A673 (cell line): ENCODE measurements at regions of chr17 and their contacts with region 1.

Region 1: DNA sequence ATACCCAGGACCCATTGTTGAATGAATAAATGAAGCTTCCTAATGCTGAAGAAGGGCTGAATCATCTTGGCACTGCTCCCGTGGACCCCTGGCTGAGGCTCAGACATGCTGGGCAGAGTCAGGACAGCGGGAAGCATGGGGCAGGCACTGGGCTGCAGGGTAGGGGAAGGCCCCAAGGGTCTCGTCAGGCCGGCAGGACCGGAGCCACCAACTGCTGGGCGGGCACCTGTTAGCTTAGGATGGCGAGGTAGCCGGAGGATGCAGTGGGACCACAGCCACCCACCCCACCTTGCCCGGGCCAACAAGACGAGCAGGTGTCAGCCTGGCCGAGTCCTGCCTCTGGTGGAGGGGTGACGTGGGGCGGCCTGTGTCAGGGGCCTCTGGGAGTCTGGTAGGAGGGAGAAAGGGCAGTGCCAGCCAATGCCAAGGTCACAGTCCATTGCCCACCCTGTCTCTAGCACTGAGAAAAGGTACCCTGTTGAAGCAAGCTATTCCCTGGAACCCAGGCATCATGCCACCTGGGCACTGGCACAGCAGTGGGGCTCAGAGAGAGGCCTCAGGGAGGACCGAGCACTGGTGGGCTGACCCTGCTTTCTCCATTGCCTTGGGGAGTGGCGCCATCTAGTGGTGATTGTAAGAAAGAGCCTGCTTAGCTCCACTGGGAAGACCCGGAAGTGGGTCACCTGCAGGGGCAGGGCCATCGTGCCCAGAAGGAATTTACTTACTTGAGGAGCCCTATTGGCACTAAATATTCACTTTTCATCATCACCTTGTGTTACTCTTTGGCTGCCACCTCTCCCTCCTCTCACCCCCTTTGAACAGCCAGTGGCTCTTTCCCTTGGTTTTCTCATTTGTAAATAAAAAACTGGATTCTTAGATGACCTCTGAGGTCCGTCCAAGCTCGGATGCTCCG is 3.0 kb upstream of the DLX3 start:
- DNase-seq: peak; percentile 94
- H3K4me3 ChIP-seq: no peak overlapping the region
- H3K27ac ChIP-seq: no peak overlapping the region
- H3K4me1 ChIP-seq: peaks cover 11% of the 10 kb centered on the region
- H3K27me3 ChIP-seq: peaks cover 55% of the 10 kb centered on the region
- CTCF ChIP-seq: peak; percentile 95

Region 2: DNA sequence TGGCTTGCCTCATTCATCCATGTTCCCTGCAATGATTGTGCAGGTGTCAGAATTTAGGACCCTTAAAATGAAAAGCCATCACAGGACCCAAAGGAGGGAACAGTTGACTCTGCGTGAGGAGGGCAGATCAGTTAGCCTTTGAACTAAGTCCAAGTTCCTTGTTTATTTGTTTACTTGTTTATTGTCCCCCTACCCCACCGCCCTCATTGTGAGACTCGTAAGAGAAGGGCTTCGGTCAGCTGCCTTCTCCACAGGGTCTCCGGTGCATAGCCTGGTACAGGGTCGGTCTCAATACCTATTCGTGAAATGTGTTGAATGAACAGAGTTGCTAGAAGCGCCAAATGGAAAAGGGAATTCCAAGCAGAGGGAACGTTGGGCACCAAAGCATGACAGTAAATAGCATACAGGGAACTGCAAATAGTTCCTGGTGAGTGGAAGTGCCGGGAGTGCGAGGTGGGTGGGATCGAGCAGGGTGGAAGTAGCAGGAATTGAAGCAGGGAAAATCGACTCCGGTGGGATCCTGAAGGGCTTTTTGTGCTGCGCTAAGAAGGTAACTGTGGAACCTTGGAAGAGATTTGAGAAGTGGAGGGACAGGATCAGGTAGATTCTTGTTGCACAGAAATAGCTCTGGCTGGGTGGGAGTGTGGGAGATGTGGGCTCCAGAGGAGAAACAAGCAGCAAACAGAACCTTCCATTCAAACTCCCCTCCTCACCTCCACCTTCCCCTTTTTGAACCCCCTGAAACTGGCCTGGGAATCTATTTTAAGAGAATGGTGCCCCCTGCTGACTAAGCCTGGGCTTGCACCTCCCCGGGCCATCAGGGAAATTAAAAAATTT is 303.0 kb before region 1 on chr17:
- CTCF ChIA-PET with region 1: no interaction called
- POLR2A ChIA-PET with region 1: no interaction called
- intact Hi-C with region 1: loop called (anchors 5 kb)
- DNase-seq: peak; percentile 49
- H3K4me3 ChIP-seq: no peak overlapping the region
- H3K27ac ChIP-seq: no peak overlapping the region
- H3K4me1 ChIP-seq: no peaks in the 10 kb centered on the region
- H3K27me3 ChIP-seq: no peaks in the 10 kb centered on the region
- CTCF ChIP-seq: peak; percentile 96

Region 3: GRCh38 chr17:49861150-49861892 is 136.7 kb before region 1 on chr17:
- CTCF ChIA-PET with region 1: interaction called, 71 read pairs
- POLR2A ChIA-PET with region 1: no interaction called
- intact Hi-C with region 1: loop called (anchors 1 kb)
- DNase-seq: peak; percentile 57
- H3K4me3 ChIP-seq: no peak overlapping the region
- H3K27ac ChIP-seq: no peak overlapping the region
- H3K4me1 ChIP-seq: no peaks in the 10 kb centered on the region
- H3K27me3 ChIP-seq: no peaks in the 10 kb centered on the region
- CTCF ChIP-seq: peak; percentile 96

Region 4: GRCh38 chr17:49880291-49881053 is 117.6 kb before region 1 on chr17:
- CTCF ChIA-PET with region 1: interaction called, 10 read pairs
- POLR2A ChIA-PET with region 1: no interaction called
- intact Hi-C with region 1: loop called (anchors 5 kb)
- DNase-seq: peak; percentile 73
- H3K4me3 ChIP-seq: no peak overlapping the region
- H3K27ac ChIP-seq: no peak overlapping the region
- H3K4me1 ChIP-seq: no peaks in the 10 kb centered on the region
- H3K27me3 ChIP-seq: peaks cover 32% of the 10 kb centered on the region
- CTCF ChIP-seq: peak; percentile 94

Region 5: DNA sequence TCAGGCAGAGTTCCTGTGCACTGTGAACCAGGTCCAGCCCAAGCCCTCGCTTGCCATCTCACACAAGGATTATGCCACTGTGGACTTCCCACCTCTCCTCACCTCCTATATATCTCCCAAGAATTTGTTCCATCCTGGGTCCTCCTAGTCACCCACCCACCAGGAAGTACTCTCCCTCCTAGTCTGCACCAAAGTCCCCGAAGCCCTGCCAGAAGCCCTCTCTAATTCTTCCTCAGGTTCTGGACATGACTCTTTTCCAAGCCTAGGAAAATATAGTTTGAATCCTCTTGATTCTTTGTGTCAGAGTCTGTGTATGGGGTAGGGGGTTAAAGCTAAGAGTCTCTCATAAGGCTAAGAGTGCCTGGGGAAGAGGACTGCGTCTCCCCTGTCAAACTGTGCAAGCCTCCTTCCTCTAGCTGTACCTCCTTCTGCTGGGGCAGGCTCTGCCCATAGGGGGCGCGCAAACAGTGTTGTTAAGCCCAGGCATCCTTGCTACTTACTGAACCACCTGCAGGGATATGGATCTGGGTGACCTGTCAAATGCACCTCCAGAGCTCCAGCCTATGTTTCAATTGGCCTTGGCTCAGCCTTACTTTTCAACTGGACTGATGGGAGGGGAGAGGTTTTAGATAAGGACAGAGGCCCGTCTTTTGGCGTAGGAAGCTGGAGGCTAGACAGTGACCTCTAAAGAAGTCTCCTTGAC is 45.7 kb before region 1 on chr17:
- CTCF ChIA-PET with region 1: interaction called, 28 read pairs
- POLR2A ChIA-PET with region 1: no interaction called
- intact Hi-C with region 1: loop called (anchors 5 kb)
- DNase-seq: peak; percentile 77
- H3K4me3 ChIP-seq: no peak overlapping the region
- H3K27ac ChIP-seq: no peak overlapping the region
- H3K4me1 ChIP-seq: no peaks in the 10 kb centered on the region
- H3K27me3 ChIP-seq: no peaks in the 10 kb centered on the region
- CTCF ChIP-seq: peak; percentile 97